ENCODE measurements at regions of chrX and their contacts with region 1.

Region 1: DNA sequence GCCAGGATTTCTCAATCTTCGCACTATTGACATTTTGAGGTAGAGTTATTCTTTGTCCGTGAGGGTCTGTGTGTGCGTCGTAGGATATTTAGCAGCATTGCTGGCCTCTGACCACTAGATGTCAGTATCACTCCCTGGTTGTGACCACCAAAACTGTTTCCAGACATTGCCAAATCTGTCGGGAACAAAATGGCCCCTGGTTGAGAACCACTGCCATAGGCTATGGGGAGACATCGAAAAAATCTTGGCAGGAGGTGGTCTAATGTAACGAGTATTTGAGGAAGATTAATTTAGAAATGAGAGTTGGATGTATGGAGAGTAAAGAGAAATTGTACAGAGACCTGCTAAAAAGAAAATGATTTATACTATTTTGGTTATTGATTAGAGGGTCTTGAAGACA is 108.4 kb downstream of the DOCK11 start:
- DNase-seq: peak in 29 of 35 experiments; percentile 0 to 63 (median 11)
- ATAC-seq: peak in 3 of 4 experiments; percentile 29 to 57 (median 43)
- H3K4me3 ChIP-seq: no peak overlapping the region
- H3K4me3 Mint-ChIP-seq: no peak overlapping the region
- H3K27ac ChIP-seq: no peak overlapping the region
- H3K27ac Mint-ChIP-seq: peak overlapping the region in 1 of 2 donors; percentile 25
- H3K4me1 ChIP-seq: no peaks in the 10 kb centered on the region
- H3K4me1 Mint-ChIP-seq: peaks cover 12 to 22% (median 18%) of the 10 kb centered on the region in 3 donors
- H3K27me3 ChIP-seq: no peaks in the 10 kb centered on the region
- H3K27me3 Mint-ChIP-seq: no peaks in the 10 kb centered on the region

Region 2: GRCh38 chrX:118459494-118459893 is 144.5 kb before region 1 on chrX:
- CTCF ChIA-PET with region 1: interaction called, 8 to 32 read pairs
- POLR2A ChIA-PET with region 1: interaction called in 1 of 2 experiments, 3 read pairs
- DNase-seq: peak in 23 of 35 experiments; percentile 0 to 58 (median 6)
- ATAC-seq: peak in 3 of 4 experiments; percentile 37 to 53 (median 53)
- H3K4me3 ChIP-seq: no peak overlapping the region
- H3K4me3 Mint-ChIP-seq: no peak overlapping the region
- H3K27ac ChIP-seq: no peak overlapping the region
- H3K27ac Mint-ChIP-seq: no peak overlapping the region
- H3K4me1 ChIP-seq: no peaks in the 10 kb centered on the region
- H3K4me1 Mint-ChIP-seq: peaks cover 0 to 4% (median 0%) of the 10 kb centered on the region in 3 donors
- H3K27me3 ChIP-seq: no peaks in the 10 kb centered on the region
- H3K27me3 Mint-ChIP-seq: peaks cover 0 to 8% of the 10 kb centered on the region in 2 donors

Region 3: DNA sequence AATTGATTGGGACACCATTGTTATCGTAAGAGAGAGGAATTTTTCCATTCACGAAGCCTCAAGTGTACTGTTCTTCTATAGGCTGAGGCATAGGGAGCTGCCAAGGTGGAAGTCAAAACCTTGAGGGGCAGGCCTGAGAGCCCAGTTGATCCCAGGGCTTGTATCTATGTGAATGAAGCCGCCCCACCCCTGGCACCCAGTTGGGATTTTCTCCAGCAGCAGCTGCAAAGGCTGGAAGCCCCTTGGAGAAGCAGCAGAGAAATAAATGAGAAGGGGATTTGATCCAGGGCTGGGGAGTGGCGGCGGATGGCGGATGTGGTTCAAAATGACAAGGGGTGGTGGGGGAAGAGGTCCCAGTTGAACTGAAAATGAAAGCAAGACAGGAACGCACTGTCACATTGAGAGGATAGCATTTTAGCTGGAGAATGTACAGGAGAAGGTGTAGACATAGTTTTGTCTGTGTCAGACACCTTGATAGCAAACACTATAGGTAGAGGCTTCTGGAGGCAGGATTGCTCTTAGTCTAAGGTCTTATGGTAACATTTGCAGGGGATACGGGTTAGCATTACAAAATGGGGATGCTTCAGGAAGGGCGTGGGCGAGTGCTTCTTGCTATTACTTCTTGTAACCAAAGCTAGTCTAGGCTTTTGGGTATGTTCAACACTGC is 75.8 kb before region 1 on chrX:
- CTCF ChIA-PET with region 1: interaction called in 1 of 2 experiments, 4 read pairs
- POLR2A ChIA-PET with region 1: interaction called in 1 of 2 experiments, 12 read pairs
- DNase-seq: peak in 34 of 35 experiments; percentile 28 to 76 (median 47)
- ATAC-seq: peak; percentile 76 to 81 (median 80)
- H3K4me3 ChIP-seq: peak overlapping the region; percentile 55 to 68
- H3K4me3 Mint-ChIP-seq: peak overlapping the region; percentile 73 to 89 (median 83)
- H3K27ac ChIP-seq: peak overlapping the region; percentile 89
- H3K27ac Mint-ChIP-seq: peak overlapping the region; percentile 94 to 97
- H3K4me1 ChIP-seq: peaks cover 27 to 69% of the 10 kb centered on the region in 2 experiments
- H3K4me1 Mint-ChIP-seq: peaks cover 71 to 84% (median 78%) of the 10 kb centered on the region in 3 donors
- H3K27me3 ChIP-seq: no peaks in the 10 kb centered on the region
- H3K27me3 Mint-ChIP-seq: peaks cover 0 to 4% of the 10 kb centered on the region in 2 donors

Region 4: GRCh38 chrX:118717678-118718391 is 113.9 kb after region 1 on chrX:
- CTCF ChIA-PET with region 1: no interaction called
- POLR2A ChIA-PET with region 1: interaction called in 1 of 2 experiments, 10 read pairs
- DNase-seq: peak in 1 of 35 experiments; percentile 10
- ATAC-seq: no peak
- H3K4me3 ChIP-seq: no peak overlapping the region
- H3K4me3 Mint-ChIP-seq: no peak overlapping the region
- H3K27ac ChIP-seq: no peak overlapping the region
- H3K27ac Mint-ChIP-seq: no peak overlapping the region
- H3K4me1 ChIP-seq: no peaks in the 10 kb centered on the region
- H3K4me1 Mint-ChIP-seq: peaks cover 0 to 5% (median 2%) of the 10 kb centered on the region in 3 donors
- H3K27me3 ChIP-seq: no peaks in the 10 kb centered on the region
- H3K27me3 Mint-ChIP-seq: peaks cover 10 to 19% of the 10 kb centered on the region in 2 donors

Region 5: GRCh38 chrX:118983513-118983912 is 379.5 kb after region 1 on chrX:
- CTCF ChIA-PET with region 1: no interaction called
- POLR2A ChIA-PET with region 1: no interaction called
- DNase-seq: no peak
- ATAC-seq: no peak
- H3K4me3 ChIP-seq: no peak overlapping the region
- H3K4me3 Mint-ChIP-seq: no peak overlapping the region
- H3K27ac ChIP-seq: no peak overlapping the region
- H3K27ac Mint-ChIP-seq: no peak overlapping the region
- H3K4me1 ChIP-seq: no peaks in the 10 kb centered on the region
- H3K4me1 Mint-ChIP-seq: peaks cover 0 to 15% (median 5%) of the 10 kb centered on the region in 3 donors
- H3K27me3 ChIP-seq: no peaks in the 10 kb centered on the region
- H3K27me3 Mint-ChIP-seq: peaks cover 0 to 27% of the 10 kb centered on the region in 2 donors